A673 (cell line): ENCODE measurements at regions of chr7 and their contacts with region 1.

Region 1: DNA sequence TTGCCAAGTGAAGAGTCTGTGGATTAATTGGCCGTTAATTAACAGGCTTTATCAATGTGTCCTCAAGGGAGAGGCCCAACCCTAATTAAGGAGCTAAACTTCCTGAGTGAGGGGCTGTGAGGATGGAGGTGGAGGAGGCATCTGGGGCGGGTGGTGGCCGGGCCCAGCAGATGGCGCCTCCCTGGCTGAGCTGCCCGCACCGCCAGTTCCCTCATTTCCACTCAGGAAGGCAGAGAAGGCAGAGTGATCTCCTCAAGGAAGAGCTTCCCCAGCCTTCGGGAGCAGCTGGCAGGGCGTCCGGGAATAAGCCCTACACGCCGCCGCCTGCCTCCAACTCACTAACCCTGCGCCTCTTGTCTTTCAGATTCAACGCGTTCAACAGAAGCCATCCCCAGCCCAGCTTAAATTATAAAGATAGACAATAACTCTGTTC is 112.2 kb downstream of the CYTH3 start:
- DNase-seq: peak; percentile 61
- H3K4me3 ChIP-seq: no peak overlapping the region
- H3K27ac ChIP-seq: peak overlapping the region; percentile 37
- H3K4me1 ChIP-seq: no peaks in the 10 kb centered on the region
- H3K27me3 ChIP-seq: no peaks in the 10 kb centered on the region
- CTCF ChIP-seq: peak; percentile 78

Region 2: DNA sequence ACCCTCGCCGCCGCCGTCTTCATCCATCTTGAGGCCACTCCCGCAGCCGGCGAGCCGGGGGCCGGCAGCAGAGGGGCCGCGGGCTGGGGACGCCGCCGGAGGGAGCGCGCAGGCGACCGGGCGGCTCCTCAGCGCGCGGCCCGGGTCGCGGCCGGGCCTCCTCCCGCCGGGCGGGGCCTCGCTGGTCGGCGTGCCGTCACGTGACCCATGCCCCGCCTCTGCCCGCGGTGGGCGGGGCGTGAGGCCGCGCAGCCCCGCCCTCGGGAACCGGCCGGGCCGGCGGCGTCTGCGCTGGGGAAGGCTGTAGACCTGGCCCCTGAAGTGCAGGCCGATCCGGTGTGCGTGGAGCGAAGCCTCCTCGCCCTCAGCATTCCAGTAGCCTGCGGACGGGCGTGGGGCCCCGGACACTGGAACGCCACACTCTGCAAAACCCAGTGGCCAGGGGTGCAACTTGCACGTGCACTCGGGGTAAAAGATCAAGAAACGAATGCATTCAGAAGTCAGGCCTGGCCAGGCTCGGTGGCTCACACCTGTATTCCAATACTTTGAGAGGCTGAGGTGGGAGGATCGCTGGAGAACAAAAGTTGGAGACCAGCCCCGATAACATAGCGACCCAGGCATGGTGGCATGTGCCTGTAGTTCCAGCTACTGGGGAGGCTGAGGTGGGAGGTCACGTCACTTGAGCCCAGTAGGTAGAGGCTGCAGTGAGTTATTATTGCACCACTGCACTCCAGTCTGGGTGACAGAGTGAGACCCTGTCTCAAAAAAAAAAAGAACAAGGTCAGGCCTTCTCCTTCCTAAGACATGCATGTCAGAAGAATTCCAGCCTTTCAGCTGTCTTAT is 112.5 kb after region 1 on chr7 and contains the start of gene CYTH3:
- CTCF ChIA-PET with region 1: interaction called, 3 read pairs
- POLR2A ChIA-PET with region 1: no interaction called
- intact Hi-C with region 1: loop called (anchors 5 kb)
- DNase-seq: peak; percentile 83
- H3K4me3 ChIP-seq: peak within 1 kb of the TSS; percentile 65
- H3K27ac ChIP-seq: peak within 1 kb of the TSS; percentile 48
- H3K4me1 ChIP-seq: peaks cover 6% of the 10 kb centered on the region
- H3K27me3 ChIP-seq: no peaks in the 10 kb centered on the region
- CTCF ChIP-seq: no peak
- total RNA-seq, gene CYTH3: 20.2 and 20.5 TPM in 2 replicates